ENCODE measurements at regions of chr12 and their contacts with region 1.

Region 1: DNA sequence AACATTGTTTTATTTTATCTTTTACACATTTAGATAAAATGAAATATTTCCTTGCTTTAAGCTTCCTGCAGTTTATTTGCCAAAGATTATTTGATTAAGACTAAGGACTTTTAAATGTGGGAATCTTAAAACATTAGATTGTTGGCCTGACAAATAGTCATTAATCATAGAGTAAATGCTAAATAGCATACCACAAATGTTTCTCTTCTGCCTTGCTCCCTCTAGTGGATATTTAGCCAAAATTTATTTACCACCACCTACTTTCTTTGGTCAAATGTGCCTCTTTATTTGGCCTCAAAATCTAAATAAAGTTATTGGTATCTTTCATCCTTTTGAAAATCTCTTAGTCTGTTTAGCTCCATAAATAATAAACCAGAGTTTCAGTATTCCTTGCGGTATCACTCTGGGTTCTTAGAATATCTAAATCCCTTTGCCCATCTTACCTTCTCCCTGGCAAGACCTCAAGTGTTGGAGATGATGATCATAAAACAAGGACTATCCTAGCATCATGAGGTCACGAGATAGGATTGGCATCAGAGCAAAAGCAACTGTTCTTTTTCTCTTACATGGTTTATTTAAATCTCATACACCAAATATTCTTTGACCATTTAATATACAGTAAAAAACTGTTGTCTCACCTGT is 150.6 kb upstream of the AEBP2 start:
- DNase-seq: peak; percentile 61
- H3K4me3 ChIP-seq: no peak overlapping the region
- H3K27ac ChIP-seq: no peak overlapping the region
- H3K4me1 ChIP-seq: 0 out of 2 replicates have a peak, but pooled peaks cover 3% of the 10 kb centered on the region
- H3K27me3 ChIP-seq: no peaks in the 10 kb centered on the region

Region 2: DNA sequence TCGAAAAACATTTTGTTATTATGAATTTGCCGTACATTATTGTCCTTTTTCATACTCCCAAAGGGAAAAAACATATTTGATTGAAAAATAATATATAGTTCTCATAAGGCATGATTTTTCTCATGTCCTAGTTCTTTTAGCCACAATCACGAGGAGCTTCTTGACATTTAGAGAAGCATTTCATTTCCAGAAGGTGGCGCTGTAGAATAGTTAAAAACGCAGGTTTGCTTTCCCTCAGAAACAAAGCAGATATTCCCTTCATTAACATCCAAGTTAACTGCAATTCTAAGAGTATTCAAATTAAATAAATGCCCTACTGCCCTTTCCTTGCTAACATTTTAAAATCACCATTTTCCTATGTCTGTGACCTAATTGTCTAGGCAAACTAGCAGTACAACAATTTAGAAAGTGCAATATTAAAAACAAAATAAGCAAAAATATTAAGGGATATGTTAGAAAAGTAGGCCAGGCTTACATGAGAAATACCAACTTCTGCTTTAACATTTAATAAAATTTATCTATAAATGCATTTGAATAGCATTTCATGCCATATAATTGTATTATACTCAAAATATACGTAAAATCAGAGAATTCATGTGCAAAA is 1038.3 kb before region 1 on chr12:
- in situ Hi-C with region 1: loop called (anchors 25 kb)
- DNase-seq: peak; percentile 84
- H3K4me3 ChIP-seq: no peak overlapping the region
- H3K27ac ChIP-seq: no peak overlapping the region
- H3K4me1 ChIP-seq: no peaks in the 10 kb centered on the region
- H3K27me3 ChIP-seq: no peaks in the 10 kb centered on the region

Region 3: GRCh38 chr12:18430425-18431048 is 858.2 kb before region 1 on chr12:
- in situ Hi-C with region 1: loop called (anchors 25 kb)
- DNase-seq: peak; percentile 76
- H3K4me3 ChIP-seq: no peak overlapping the region
- H3K27ac ChIP-seq: no peak overlapping the region
- H3K4me1 ChIP-seq: peaks cover 3% of the 10 kb centered on the region; the same call in 1 of the 2 replicates
- H3K27me3 ChIP-seq: no peaks in the 10 kb centered on the region

Region 4: DNA sequence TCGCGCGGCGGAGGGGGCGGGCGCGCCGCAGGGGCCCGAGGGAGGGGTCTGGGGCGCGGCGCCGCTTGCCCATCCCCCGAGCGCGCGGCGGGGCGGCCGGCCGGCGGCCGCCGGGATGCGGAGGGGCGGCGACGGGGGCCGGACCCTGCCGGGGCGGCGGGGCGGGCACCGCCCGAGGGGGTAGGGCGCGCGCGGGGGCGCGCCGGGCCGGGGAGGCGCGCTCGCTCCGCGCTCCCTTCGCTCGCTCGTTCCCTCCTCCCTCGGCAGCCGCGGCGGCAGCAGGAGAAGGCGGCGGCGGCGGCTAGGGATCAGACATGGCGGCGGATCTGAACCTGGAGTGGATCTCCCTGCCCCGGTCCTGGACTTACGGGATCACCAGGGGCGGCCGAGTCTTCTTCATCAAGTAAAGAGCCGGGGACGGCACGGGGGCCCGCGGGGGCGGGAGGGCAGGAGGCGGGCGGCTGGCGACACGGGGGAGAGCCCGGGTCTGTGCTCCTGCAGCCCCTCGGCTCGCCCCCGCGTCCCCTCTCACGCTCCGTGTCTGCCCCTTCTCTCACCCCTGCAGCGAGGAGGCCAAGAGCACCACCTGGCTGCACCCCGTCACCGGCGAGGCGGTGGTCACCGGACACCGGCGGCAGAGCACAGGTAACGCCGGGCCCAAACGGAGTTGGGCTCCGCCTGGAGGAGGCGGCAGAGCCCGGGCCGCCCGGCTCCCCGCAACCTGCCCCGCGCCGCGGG is 159.1 kb before region 1 on chr12 and contains the start of gene PLEKHA5:
- in situ Hi-C with region 1: no loop called
- DNase-seq: peak; percentile 90
- H3K4me3 ChIP-seq: peak within 1 kb of the TSS; percentile 95
- H3K27ac ChIP-seq: peak within 1 kb of the TSS; percentile 70
- H3K4me1 ChIP-seq: peaks cover 11% of the 10 kb centered on the region; the same call in 1 of the 2 replicates
- H3K27me3 ChIP-seq: no peaks in the 10 kb centered on the region
- total RNA-seq, gene PLEKHA5: 12.1 and 12.4 TPM in 2 replicates

Region 5: GRCh38 chr12:19588951-19589350 is 300.2 kb after region 1 on chr12:
- in situ Hi-C with region 1: no loop called
- DNase-seq: no peak
- H3K4me3 ChIP-seq: no peak overlapping the region
- H3K27ac ChIP-seq: no peak overlapping the region
- H3K4me1 ChIP-seq: no peaks in the 10 kb centered on the region
- H3K27me3 ChIP-seq: no peaks in the 10 kb centered on the region

Measured in GM23248 (cell line).